K562 (cell line): ENCODE measurements at regions of chr10 and their contacts with region 1.

Region 1: DNA sequence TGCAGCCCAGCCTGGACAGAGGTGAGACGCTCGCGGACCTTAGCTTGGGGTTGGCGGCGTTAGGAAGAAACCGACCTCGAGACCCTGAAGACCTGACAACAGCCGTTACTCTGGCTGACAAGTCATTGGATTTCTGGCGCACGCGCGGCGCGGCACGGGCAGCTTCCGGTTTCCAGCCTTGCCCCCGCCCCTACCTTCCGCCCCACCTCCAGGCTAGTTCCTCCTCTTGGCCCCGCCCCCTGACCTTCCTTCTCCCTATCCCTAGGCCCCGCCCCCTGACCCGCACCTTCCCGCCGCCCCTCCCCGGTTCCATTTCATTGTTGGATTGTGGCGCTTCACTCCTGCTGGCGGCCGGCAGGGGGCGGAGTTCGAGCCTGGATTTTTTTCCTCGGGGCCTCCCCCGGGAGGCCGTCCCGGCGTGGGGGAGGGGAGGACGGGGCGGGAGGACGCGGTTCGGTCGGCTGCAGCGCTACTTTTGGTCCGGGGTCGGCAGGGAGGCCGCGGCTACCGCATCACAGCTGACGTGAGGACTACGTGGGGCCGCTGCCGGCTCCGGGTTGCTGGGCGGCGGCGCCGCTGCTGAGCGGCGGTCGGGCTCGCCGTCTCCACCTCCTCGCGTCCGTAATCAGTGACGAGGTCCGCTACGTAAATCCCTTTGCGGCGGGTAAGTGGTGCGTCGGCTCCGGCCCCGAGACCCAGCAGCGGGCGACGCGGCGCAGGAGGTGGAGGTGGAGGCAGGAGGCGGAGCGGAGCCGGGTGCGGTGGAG is at the start of gene CREM:
- DNase-seq: peak; percentile 97 to 98 (median 98)
- ATAC-seq: peak; percentile 84
- H3K4me3 ChIP-seq: peak within 1 kb of the TSS; percentile 95
- H3K27ac ChIP-seq: peak within 1 kb of the TSS; percentile 99
- H3K4me1 ChIP-seq: peaks cover 15 to 22% of the 10 kb centered on the region in 2 experiments
- H3K27me3 ChIP-seq: no peaks in the 10 kb centered on the region
- CTCF ChIP-seq: peak; percentile 55 to 89 (median 82); a peak in 5 of 6 replicates
- EP300 ChIP-seq: no peak
- POLR2A ChIP-seq: peak; percentile 93
- RAD21 ChIP-seq: peak; percentile 62 to 78
- polyA plus RNA-seq, gene CREM: 47.0 to 48.3 TPM

Region 2: DNA sequence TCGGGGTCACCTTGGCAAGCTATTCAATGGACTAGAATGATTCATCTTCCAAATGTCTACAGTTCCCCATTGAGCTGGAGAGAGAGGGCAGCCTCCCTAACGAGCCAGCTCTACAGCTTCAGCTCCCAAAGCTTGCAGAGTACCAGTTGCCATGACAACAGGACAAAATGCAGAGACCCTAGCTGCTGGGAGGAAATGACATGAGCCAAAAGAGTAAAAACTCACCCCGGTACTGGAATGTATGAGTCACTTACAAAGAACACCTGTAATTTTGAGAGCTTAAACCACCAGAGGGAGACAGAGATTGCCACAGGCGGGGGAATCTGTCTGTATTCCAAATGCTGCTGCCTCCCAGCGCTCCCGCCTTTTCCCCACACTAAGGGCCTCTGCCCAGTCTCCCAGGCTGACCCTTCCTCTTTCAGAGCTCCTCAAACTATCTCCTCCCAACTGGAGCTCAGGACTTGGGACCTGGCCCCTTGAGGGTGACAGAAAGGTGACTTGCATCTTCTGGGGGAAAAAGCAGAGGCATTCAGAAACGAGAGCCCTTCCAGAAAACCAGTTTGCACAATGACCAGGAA is 132.1 kb before region 1 on chr10:
- CTCF ChIA-PET with region 1: no interaction called
- POLR2A ChIA-PET with region 1: no interaction called
- in situ Hi-C with region 1: no loop called
- intact Hi-C with region 1: loop called (anchors 10 kb)
- DNase-seq: peak; percentile 56 to 72 (median 64)
- ATAC-seq: peak; percentile 89
- H3K4me3 ChIP-seq: no peak overlapping the region
- H3K27ac ChIP-seq: no peak overlapping the region
- H3K4me1 ChIP-seq: no peaks in the 10 kb centered on the region
- H3K27me3 ChIP-seq: no peaks in the 10 kb centered on the region; a peak in 1 of 5 replicates
- CTCF ChIP-seq: peak; percentile 81 to 88 (median 82)
- EP300 ChIP-seq: no peak
- POLR2A ChIP-seq: no peak
- RAD21 ChIP-seq: peak; percentile 57 to 84

Region 3: DNA sequence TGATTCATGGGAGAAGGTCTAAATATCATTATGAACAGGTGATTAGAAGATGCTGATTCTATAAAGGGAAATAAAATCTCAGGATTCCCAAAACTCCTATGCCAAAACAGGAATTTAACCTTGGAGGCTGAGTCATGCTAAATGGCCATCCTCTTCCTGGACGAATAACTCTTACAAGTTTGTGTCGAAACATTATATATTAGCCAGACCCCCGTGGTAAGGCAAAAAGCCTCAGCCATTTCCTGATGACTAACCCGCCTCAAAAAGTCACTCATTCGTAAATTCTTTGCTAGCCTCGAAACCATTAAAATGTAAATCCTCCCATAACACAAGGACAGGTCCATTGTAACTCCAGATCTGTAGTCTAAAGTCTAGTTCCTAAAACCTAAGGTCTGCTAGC is 68.6 kb before region 1 on chr10:
- CTCF ChIA-PET with region 1: no interaction called
- POLR2A ChIA-PET with region 1: no interaction called
- in situ Hi-C with region 1: no loop called
- intact Hi-C with region 1: no loop called
- DNase-seq: no peak
- ATAC-seq: no peak
- H3K4me3 ChIP-seq: no peak overlapping the region
- H3K27ac ChIP-seq: no peak overlapping the region
- H3K4me1 ChIP-seq: peaks cover 0 to under 1% of the 10 kb centered on the region in 2 experiments; a peak in 3 of 5 replicates
- H3K27me3 ChIP-seq: no peaks in the 10 kb centered on the region
- CTCF ChIP-seq: no peak
- EP300 ChIP-seq: no peak
- POLR2A ChIP-seq: no peak
- RAD21 ChIP-seq: no peak

Region 4: DNA sequence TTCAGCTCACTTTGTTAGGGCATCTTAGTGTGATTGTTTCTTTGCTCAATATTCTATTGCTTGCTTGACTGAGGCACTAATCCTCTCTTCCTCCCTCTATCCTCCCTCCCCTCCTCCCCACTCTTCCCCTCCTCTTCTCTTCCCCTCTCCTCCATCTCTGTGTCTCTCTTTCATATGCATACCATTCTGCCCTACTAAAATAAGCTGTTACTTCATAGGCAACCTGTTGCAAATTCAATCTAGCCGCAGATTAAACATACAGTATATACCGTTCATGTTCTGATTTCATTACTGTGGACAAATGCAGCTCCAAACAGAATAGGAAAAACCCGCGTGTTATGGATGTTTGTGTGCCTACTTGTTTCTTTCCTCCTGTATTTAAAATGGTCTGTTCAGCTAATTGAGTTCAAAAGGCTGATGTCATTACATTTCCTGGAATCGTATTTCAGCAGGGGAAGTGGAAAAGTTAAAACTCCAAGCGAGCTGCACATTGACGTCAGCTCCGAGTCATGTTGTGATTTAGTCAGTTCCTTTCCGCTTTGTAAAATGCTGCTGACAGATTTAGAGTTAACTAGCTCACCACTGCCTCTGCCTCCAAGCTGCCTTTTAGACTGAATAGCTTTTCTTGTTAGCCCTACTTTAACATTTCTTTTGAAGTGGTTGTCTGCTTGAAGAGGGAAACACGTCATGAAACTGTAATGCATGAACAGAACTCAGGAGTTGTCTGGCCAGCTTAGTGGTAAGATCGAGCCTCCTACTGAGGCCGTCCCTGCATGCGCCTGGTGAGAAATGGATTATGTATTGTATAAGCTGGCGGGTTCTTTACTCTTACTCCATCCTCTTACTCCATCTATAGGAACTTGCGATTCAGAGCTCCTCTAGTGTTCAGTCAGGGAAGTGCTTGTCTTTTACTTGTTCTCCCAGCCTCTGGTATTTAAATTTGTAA is 68.9 kb after region 1 on chr10:
- CTCF ChIA-PET with region 1: interaction called, 7 read pairs
- POLR2A ChIA-PET with region 1: interaction called, 24 read pairs
- in situ Hi-C with region 1: no loop called
- intact Hi-C with region 1: loop called (anchors 1 kb)
- DNase-seq: peak; percentile 46 to 88 (median 56)
- ATAC-seq: peak; percentile 89
- H3K4me3 ChIP-seq: peak overlapping the region; percentile 38
- H3K27ac ChIP-seq: peak overlapping the region; percentile 87
- H3K4me1 ChIP-seq: peaks cover 0 to 23% of the 10 kb centered on the region in 2 experiments; a peak in 4 of 5 replicates
- H3K27me3 ChIP-seq: no peaks in the 10 kb centered on the region
- CTCF ChIP-seq: peak; percentile 82 to 83 (median 83)
- EP300 ChIP-seq: peak; percentile 29; the same call in 1 of the 2 replicates
- POLR2A ChIP-seq: 0 out of 2 replicates have a peak, but pooled peaks have one; percentile 52
- RAD21 ChIP-seq: peak; percentile 45 to 67

Region 5: GRCh38 chr10:35251373-35252100 is 124.8 kb after region 1 on chr10:
- CTCF ChIA-PET with region 1: no interaction called
- POLR2A ChIA-PET with region 1: no interaction called
- in situ Hi-C with region 1: no loop called
- intact Hi-C with region 1: no loop called
- DNase-seq: no peak
- ATAC-seq: no peak
- H3K4me3 ChIP-seq: no peak overlapping the region
- H3K27ac ChIP-seq: no peak overlapping the region
- H3K4me1 ChIP-seq: no peaks in the 10 kb centered on the region; a peak in 1 of 5 replicates
- H3K27me3 ChIP-seq: no peaks in the 10 kb centered on the region
- CTCF ChIP-seq: no peak
- EP300 ChIP-seq: no peak
- POLR2A ChIP-seq: no peak
- RAD21 ChIP-seq: no peak

Region 6: DNA sequence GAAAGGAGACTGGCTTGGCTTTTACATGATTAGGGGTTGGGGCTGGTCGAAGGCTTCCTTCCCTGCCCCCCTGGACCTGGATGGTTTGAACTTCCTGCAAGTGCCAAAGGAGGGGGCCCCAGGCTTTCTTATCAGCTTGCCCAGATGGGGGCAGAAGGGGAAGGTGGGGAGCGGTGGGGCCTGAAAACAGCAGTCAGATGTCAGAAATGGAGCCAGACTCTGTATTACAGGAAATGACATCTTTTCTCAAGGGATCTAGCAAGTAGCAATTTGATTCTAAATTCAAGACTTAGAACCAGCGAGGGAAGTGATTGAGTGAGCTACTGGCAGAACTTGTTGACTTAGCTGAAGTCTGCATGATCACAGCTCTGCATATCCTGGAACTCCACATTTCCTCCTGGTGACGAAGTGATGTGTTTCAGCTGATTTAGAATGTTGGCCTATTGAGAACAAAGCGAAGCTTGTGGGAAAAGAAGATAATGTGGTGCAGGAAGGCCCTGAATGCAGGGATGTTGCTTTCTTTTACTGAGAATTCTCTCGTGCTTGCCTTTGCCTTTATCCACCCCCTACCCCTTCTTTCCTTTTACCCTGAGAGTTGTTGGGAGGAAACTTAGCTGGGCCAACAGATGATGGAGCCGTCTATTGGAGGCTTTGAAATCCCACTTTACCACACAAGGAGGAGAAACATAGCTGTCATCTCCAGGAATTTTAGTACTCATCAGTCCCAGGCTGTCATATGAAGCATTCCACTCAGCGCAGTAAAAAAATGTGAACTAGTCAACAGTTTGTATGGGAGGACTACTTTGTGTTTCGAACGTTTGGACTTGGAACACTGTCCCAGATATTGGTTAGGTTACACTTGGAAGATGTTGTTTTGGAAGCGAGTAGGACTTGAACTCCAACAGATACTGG is 252.8 kb after region 1 on chr10:
- CTCF ChIA-PET with region 1: no interaction called
- POLR2A ChIA-PET with region 1: no interaction called
- in situ Hi-C with region 1: no loop called
- intact Hi-C with region 1: loop called (anchors 10 kb)
- DNase-seq: peak; percentile 91 to 94 (median 92)
- ATAC-seq: peak; percentile 85
- H3K4me3 ChIP-seq: peak overlapping the region; percentile 27
- H3K27ac ChIP-seq: peak overlapping the region; percentile 96
- H3K4me1 ChIP-seq: peaks cover 25 to 65% of the 10 kb centered on the region in 2 experiments
- H3K27me3 ChIP-seq: no peaks in the 10 kb centered on the region
- CTCF ChIP-seq: peak; percentile 30 to 60 (median 59); a peak in 4 of 6 replicates
- EP300 ChIP-seq: peak; percentile 91
- POLR2A ChIP-seq: no peak
- RAD21 ChIP-seq: peak; percentile 57 to 64

Region 7: DNA sequence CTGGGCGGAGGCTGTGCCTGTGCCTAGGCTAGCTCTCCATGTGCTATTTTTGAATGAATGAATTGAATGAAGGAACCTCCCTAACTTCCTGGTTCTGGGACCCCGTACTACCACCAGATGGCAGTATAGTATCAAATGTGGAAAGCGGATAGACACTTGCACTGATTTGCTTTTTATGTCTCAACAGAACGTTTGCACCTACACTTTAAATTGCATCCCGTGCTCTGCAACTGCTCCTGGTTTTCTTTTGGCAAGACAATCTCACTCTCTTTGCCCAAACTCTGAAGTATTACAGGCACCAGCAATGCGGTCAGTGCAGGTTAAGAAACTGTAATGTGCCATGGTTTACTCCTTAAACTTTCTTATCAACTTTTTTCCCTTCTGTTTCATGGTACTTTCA is 508.9 kb after region 1 on chr10:
- CTCF ChIA-PET with region 1: no interaction called
- POLR2A ChIA-PET with region 1: no interaction called
- in situ Hi-C with region 1: no loop called
- intact Hi-C with region 1: loop called (anchors 10 kb)
- DNase-seq: peak; percentile 63 to 75 (median 74)
- ATAC-seq: peak; percentile 94
- H3K4me3 ChIP-seq: no peak overlapping the region
- H3K27ac ChIP-seq: no peak overlapping the region
- H3K4me1 ChIP-seq: peaks cover 0 to 9% of the 10 kb centered on the region in 2 experiments; a peak in 2 of 5 replicates
- H3K27me3 ChIP-seq: no peaks in the 10 kb centered on the region
- CTCF ChIP-seq: peak; percentile 63 to 90 (median 82)
- EP300 ChIP-seq: no peak
- POLR2A ChIP-seq: no peak
- RAD21 ChIP-seq: peak; percentile 87 to 96